ENCODE measurements at regions of chr20 and their contacts with region 1.

Region 1: DNA sequence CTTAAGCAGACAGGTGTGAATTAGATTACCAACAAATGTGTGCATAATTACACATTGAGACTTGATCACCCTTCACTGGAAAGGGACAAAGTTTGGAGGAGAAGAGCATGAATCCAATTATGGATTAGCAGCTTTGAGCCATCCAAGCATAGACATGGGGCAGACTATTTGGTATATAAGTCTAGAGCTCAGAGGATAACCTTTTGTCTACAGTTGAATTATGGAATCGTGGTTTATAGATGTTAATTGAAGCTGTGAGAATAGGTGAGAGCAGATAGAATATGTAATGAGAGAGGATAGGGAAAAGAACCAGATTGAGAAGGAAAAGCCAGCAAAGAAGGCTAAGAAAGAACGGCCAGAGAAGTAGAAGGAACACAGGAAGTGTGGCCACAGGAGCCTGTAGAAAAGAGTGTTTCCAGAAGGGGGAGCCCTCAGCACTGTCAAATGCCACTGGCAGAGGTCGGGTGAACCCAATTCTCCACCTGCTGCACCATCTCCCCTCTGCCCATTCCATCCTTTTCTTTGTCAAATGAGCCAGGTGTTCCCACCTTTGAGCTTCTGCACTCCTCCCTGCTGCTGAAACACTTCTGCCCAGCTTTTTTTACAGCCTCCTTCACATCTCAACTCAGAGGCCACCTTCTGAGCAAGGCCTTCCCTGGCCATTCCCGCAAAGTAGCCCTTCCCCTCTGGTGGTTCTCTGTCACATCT is 7.3 kb downstream of the DNTTIP1 start:
- DNase-seq: peak; percentile 24 to 60 (median 53)
- H3K4me3 ChIP-seq: no peak overlapping the region
- H3K4me3 Mint-ChIP-seq: no peak overlapping the region
- H3K27ac ChIP-seq: peak overlapping the region in 1 of 2 donors; percentile 50
- H3K27ac Mint-ChIP-seq: peak overlapping the region in 5 of 7 donors; percentile 21 to 78 (median 62)
- H3K4me1 ChIP-seq: no peaks in the 10 kb centered on the region
- H3K4me1 Mint-ChIP-seq: peaks cover 12% of the 10 kb centered on the region
- H3K27me3 ChIP-seq: no peaks in the 10 kb centered on the region
- H3K27me3 Mint-ChIP-seq: peaks cover 0 to 2% (median 0%) of the 10 kb centered on the region in 3 donors
- CTCF ChIP-seq: peak; percentile 79

Region 2: DNA sequence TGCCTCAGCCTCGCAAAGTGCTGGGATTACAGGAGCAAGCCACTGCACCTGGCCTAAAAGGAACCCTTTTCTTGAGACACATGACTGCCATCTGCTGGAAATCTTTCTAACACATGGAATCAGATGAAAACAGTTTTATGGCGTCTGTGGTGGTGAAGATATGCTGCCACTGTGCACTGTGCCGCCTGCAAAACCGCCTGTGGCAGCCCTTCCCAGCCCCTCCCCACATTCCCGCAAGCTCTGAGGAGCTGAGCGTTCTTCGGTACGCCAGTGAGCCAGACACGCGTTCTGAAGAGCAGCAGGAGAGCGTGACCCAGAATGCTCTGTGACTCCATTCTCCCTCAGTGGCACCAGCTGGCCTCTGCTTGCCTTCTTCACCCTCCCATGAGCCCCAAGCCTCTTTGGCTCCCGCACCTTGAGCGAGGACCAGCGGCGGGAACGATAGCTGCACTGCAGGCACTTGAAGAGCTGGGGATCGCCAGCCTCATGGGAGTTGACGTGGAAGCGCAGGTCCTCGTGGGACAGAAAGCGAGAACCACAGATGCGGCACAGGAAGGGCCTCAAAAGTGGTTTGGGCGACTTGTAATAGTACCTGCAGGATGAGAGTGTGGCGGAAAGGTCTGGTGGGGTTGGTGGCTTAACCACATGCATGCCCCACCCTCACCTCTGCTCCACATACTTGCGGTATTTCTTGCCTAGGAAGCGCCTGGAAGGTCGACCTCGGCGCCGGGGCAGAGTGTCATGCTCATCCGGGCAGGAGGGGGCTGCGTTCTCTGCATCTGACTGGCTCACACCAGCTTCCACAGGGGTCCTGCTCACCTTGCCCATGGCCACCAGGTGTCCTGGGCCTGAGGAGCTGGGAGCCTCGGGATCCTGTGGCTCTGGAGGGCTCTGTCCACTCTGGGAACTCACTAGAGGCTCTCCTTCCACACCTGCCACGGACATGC is 164.2 kb after region 1 on chr20:
- intact Hi-C with region 1: loop called (anchors 2 to 5 kb)
- DNase-seq: peak in 2 of 3 donors; percentile 41 to 44
- H3K4me3 ChIP-seq: no peak overlapping the region
- H3K4me3 Mint-ChIP-seq: no peak overlapping the region
- H3K27ac ChIP-seq: no peak overlapping the region
- H3K27ac Mint-ChIP-seq: peak overlapping the region in 4 of 7 donors; percentile 4 to 51 (median 23)
- H3K4me1 ChIP-seq: peaks cover under 1 to 2% of the 10 kb centered on the region in 2 donors
- H3K4me1 Mint-ChIP-seq: peaks cover under 1% of the 10 kb centered on the region
- H3K27me3 ChIP-seq: no peaks in the 10 kb centered on the region
- H3K27me3 Mint-ChIP-seq: peaks cover 0 to 2% (median 0%) of the 10 kb centered on the region in 3 donors
- CTCF ChIP-seq: peak; percentile 40

Region 3: GRCh38 chr20:46117704-46118467 is 318.8 kb after region 1 on chr20 and contains the start of gene CD40:
- intact Hi-C with region 1: loop called in 1 of 2 experiments (anchors 10 kb)
- DNase-seq: peak; percentile 62 to 90 (median 69)
- H3K4me3 ChIP-seq: peak within 1 kb of the TSS; percentile 39 to 92 (median 60)
- H3K4me3 Mint-ChIP-seq: peak within 1 kb of the TSS; percentile 96 to 99
- H3K27ac ChIP-seq: peak within 1 kb of the TSS; percentile 75 to 82
- H3K27ac Mint-ChIP-seq: peak within 1 kb of the TSS; percentile 83 to 96 (median 91)
- H3K4me1 ChIP-seq: peaks cover 33 to 47% of the 10 kb centered on the region in 2 donors
- H3K4me1 Mint-ChIP-seq: peaks cover 48% of the 10 kb centered on the region
- H3K27me3 ChIP-seq: peaks cover 2 to 18% of the 10 kb centered on the region in 2 donors
- H3K27me3 Mint-ChIP-seq: peaks cover 19 to 25% (median 21%) of the 10 kb centered on the region in 3 donors
- CTCF ChIP-seq: no peak
- polyA plus RNA-seq, gene CD40: 14.4 to 26.1 (median 18.8) TPM